ENCODE measurements at regions of chr12 and their contacts with region 1.

Region 1: DNA sequence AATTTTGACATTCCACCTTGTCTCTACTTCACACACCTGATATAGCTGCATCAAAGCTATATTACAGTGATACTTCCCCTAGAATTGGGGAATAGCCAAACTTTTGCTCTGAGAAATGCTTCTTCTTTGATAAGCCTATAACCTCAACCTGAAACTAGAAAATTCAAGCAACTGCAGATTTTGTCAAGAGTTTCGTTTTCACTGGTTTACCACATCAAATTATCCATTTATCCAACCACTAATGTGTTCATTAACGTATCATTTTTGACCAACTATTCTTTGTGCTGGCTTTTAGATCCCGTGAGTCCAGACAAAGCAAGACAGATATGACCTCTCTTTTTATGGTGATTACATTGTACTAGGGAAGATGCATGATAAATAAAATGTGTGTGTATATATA is 13.5 kb upstream of the TAS2R46 start:
- DNase-seq: no peak
- H3K4me3 Mint-ChIP-seq: no peak overlapping the region
- H3K27ac Mint-ChIP-seq: no peak overlapping the region
- H3K4me1 Mint-ChIP-seq: no peaks in the 10 kb centered on the region
- H3K27me3 Mint-ChIP-seq: no peaks in the 10 kb centered on the region

Region 2: DNA sequence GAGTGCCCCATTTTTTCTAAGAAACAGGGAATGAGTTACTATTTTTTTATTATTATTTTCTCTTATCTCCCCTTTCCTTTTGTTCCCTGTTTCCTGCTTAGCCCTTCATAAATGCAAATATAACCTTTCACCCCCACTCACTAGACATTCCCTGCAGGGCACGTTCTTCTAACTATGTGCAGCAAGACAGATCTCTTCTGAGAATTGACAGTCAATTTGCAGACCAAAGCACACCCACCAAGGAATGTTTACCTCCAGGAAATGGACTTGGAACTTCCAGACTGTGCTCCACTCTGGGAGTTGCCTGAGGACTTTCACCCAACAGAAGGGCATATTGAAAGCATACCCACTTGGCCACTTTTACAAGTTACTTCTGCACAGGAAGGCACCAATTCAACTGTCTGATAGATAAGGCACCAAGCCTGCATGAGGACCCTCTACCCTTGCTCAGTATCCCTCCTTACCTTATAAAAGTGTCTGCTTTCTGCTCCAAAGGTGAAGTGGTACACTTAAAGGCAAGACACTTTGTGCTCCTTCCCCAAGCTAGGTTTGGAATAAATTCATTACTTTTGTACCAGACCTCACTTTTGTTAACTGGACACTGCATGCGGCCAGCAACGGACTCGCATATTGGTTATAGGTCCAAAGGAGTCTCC is 59.7 kb before region 1 on chr12:
- intact Hi-C with region 1: loop called (anchors 2 kb)
- DNase-seq: no peak
- H3K4me3 Mint-ChIP-seq: no peak overlapping the region
- H3K27ac Mint-ChIP-seq: no peak overlapping the region
- H3K4me1 Mint-ChIP-seq: no peaks in the 10 kb centered on the region
- H3K27me3 Mint-ChIP-seq: peaks cover 2% of the 10 kb centered on the region

Measured in activated T-helper 1 cell treated with anti-CD3 and anti-CD28 coated beads, Interleukin-12 subunit alpha, Interleukin-12 subunit beta, Interleukin-2, Interleukin-4 antibody, amounts not matched to agents 30 ng/mL and 10 ng/mL and 1 ng/mL, durations not matched to agents 14 hours and 24 hours and 36 hours (primary cell).